ENCODE measurements at regions of chr12 and their contacts with region 1.

Region 1: GRCh38 chr12:121678716-121679580 is 9.5 kb upstream of the MORN3 start:
- DNase-seq: peak; percentile 60
- H3K4me3 ChIP-seq: no peak overlapping the region
- H3K27ac ChIP-seq: peak overlapping the region; percentile 13 to 78 (median 71)
- H3K4me1 ChIP-seq: peaks cover 15 to 17% of the 10 kb centered on the region in 2 donors
- H3K27me3 ChIP-seq: no peaks in the 10 kb centered on the region
- CTCF ChIP-seq: no peak
- POLR2A ChIP-seq: no peak

Region 2: DNA sequence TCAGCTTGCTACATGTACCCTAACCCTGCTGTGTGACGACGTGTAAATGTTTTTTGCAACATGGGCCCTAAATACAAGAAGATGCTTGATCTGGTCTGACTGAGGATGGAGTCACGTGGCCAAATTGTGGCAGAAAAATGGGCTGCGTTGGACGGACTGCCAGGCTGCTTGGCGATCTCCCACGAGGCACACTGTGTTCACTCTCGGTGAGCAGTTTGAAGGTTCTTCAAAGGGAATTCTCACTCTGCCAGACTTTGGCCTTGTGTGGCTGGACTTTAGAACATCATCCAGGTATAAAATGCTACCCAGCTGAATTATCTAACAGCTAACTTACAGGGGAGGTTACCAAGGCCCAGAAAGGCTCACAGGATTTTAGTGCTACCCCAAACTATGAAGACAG is 183.2 kb before region 1 on chr12:
- intact Hi-C with region 1: loop called (anchors 2 kb)
- DNase-seq: no peak
- H3K4me3 ChIP-seq: no peak overlapping the region
- H3K27ac ChIP-seq: no peak overlapping the region
- H3K4me1 ChIP-seq: peaks cover 0 to 3% of the 10 kb centered on the region in 2 donors
- H3K27me3 ChIP-seq: no peaks in the 10 kb centered on the region
- CTCF ChIP-seq: no peak
- POLR2A ChIP-seq: no peak

Region 3: GRCh38 chr12:121550974-121551634 is 127.8 kb before region 1 on chr12:
- intact Hi-C with region 1: loop called (anchors 5 kb)
- DNase-seq: no peak
- H3K4me3 ChIP-seq: no peak overlapping the region
- H3K27ac ChIP-seq: no peak overlapping the region
- H3K4me1 ChIP-seq: no peaks in the 10 kb centered on the region
- H3K27me3 ChIP-seq: no peaks in the 10 kb centered on the region
- CTCF ChIP-seq: no peak
- POLR2A ChIP-seq: no peak

Region 4: GRCh38 chr12:121626087-121626852 is 52.7 kb before region 1 on chr12 and contains the start of gene ORAI1:
- intact Hi-C with region 1: loop called (anchors 5 kb)
- DNase-seq: peak; percentile 99
- H3K4me3 ChIP-seq: peak within 1 kb of the TSS; percentile 26 to 74 (median 43)
- H3K27ac ChIP-seq: peak within 1 kb of the TSS; percentile 91 to 98 (median 92)
- H3K4me1 ChIP-seq: peaks cover 26 to 41% of the 10 kb centered on the region in 2 donors
- H3K27me3 ChIP-seq: no peaks in the 10 kb centered on the region
- CTCF ChIP-seq: peak in 2 of 6 experiments; percentile 35 to 40
- POLR2A ChIP-seq: peak; percentile 66 to 97
- total RNA-seq, gene ORAI1: 12.7 to 27.1 (median 17.0) TPM